ENCODE measurements at regions of chr3 and their contacts with region 1.

Region 1: DNA sequence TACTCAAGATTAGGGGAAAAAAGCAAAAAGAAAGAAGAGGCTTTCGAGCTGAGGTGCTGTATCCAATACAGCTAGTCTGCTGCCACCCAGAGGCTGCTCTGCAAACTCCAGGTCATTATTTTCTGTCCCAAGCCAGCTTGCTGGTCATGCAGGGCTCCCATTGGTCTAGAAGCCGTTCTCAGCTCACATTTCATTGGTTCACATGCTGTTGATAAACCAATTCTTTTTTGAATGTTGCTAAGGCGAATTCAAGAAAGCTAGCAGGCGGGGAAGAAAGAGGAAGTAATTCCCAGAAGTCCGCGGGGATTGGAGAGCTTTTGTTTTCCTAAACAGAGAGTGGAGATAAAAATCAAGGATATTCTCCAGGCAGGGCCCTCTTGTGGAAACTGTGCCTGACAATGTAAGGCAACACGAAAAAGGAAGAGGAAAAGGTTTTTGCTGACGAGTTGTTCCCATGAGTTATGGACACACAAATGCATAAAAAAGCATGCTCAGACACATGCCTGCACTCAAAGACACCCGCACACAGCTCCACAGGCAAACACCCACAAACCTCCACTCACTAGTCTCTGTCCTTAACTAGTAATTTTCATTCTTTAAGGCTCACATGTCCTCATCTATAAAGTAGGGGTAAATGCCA is 33.4 kb downstream of the FSTL1 start:
- DNase-seq: peak; percentile 97
- H3K4me3 Mint-ChIP-seq: peak overlapping the region; percentile 76
- H3K27ac Mint-ChIP-seq: peak overlapping the region; percentile 91
- H3K4me1 Mint-ChIP-seq: peaks cover 28% of the 10 kb centered on the region
- H3K27me3 Mint-ChIP-seq: no peaks in the 10 kb centered on the region
- CTCF ChIP-seq: peak; percentile 89

Region 2: GRCh38 chr3:119918992-119919933 is 498.1 kb before region 1 on chr3:
- CTCF ChIA-PET with region 1: no interaction called
- POLR2A ChIA-PET with region 1: no interaction called
- intact Hi-C with region 1: no loop called
- DNase-seq: no peak
- H3K4me3 Mint-ChIP-seq: no peak overlapping the region
- H3K27ac Mint-ChIP-seq: no peak overlapping the region
- H3K4me1 Mint-ChIP-seq: peaks cover 5% of the 10 kb centered on the region
- H3K27me3 Mint-ChIP-seq: no peaks in the 10 kb centered on the region
- CTCF ChIP-seq: no peak

Region 3: GRCh38 chr3:120245386-120245785 is 172.0 kb before region 1 on chr3:
- CTCF ChIA-PET with region 1: interaction called, 148 read pairs
- POLR2A ChIA-PET with region 1: interaction called, 17 read pairs
- intact Hi-C with region 1: loop called (anchors 1 kb)
- DNase-seq: no peak
- H3K4me3 Mint-ChIP-seq: no peak overlapping the region
- H3K27ac Mint-ChIP-seq: no peak overlapping the region
- H3K4me1 Mint-ChIP-seq: no peaks in the 10 kb centered on the region
- H3K27me3 Mint-ChIP-seq: no peaks in the 10 kb centered on the region
- CTCF ChIP-seq: no peak

Region 4: GRCh38 chr3:120393243-120393642 is 24.1 kb before region 1 on chr3:
- CTCF ChIA-PET with region 1: interaction called, 17 read pairs
- POLR2A ChIA-PET with region 1: no interaction called
- intact Hi-C with region 1: no loop called
- DNase-seq: no peak
- H3K4me3 Mint-ChIP-seq: no peak overlapping the region
- H3K27ac Mint-ChIP-seq: no peak overlapping the region
- H3K4me1 Mint-ChIP-seq: no peaks in the 10 kb centered on the region
- H3K27me3 Mint-ChIP-seq: no peaks in the 10 kb centered on the region
- CTCF ChIP-seq: no peak

Region 5: DNA sequence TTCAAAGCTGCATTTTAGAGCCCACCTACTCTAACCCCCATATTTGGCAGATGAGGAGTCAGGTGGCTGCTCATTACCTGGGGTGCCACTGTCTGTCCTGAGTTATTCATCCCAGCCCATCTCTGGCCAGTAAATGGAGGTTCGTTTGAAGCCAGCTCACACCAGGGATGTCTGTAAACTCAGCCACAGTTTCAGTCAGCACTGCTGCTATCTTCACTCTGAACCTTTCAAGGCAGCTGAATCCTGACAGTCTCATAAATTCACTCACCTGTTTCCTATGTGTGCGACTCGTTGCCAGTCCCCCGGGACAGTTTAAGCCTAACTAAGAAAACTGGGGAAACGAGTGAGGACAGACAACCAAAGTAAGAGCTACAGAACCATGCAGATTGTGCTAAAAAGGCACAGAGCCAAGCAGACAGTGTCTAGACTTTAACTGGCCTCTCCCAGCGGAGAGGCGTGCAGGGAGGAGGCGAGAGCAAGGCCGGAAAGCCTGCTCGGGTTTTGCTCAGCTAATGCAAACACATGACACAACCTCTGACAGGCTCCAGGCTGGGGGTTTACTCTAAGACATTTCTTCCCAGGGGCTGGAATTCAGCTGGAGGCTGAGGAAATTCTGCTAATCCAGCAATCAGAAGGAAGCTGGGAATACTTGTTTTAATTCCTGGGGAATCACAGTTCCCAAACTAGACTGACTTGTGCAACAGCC is 21.4 kb after region 1 on chr3:
- CTCF ChIA-PET with region 1: interaction called, 53 read pairs
- POLR2A ChIA-PET with region 1: no interaction called
- intact Hi-C with region 1: no loop called
- DNase-seq: no peak
- H3K4me3 Mint-ChIP-seq: no peak overlapping the region
- H3K27ac Mint-ChIP-seq: no peak overlapping the region
- H3K4me1 Mint-ChIP-seq: peaks cover 16% of the 10 kb centered on the region
- H3K27me3 Mint-ChIP-seq: no peaks in the 10 kb centered on the region
- CTCF ChIP-seq: no peak

Region 6: GRCh38 chr3:120550546-120550945 is 133.2 kb after region 1 on chr3:
- CTCF ChIA-PET with region 1: interaction called, 429 read pairs
- POLR2A ChIA-PET with region 1: no interaction called
- intact Hi-C with region 1: no loop called
- DNase-seq: no peak
- H3K4me3 Mint-ChIP-seq: no peak overlapping the region
- H3K27ac Mint-ChIP-seq: no peak overlapping the region
- H3K4me1 Mint-ChIP-seq: no peaks in the 10 kb centered on the region
- H3K27me3 Mint-ChIP-seq: no peaks in the 10 kb centered on the region
- CTCF ChIP-seq: no peak

Region 7: DNA sequence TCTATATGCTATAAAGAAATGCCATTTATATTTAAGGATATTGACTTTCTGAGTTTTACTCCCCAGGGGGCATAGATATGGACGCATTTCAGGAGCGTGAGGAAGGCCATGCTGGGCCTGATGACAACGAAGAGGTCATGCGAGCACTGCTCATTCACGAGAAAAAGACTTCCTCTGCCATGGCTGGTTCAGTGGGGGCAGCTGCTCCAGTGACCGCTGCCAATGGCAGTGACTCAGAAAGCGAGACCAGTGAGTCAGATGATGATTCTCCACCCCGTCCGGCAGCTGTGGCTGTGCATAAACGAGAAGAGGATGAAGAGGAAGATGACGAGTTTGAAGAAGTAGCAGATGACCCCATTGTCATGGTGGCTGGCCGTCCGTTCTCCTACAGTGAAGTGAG is 363.6 kb after region 1 on chr3:
- CTCF ChIA-PET with region 1: interaction called, 14 read pairs
- POLR2A ChIA-PET with region 1: no interaction called
- intact Hi-C with region 1: no loop called
- DNase-seq: peak; percentile 84
- H3K4me3 Mint-ChIP-seq: peak overlapping the region; percentile 12
- H3K27ac Mint-ChIP-seq: peak overlapping the region; percentile 49
- H3K4me1 Mint-ChIP-seq: peaks cover 12% of the 10 kb centered on the region
- H3K27me3 Mint-ChIP-seq: no peaks in the 10 kb centered on the region
- CTCF ChIP-seq: no peak